ENCODE measurements at regions of chr17 and their contacts with region 1.

Region 1: GRCh38 chr17:12667299-12667958 is 1.7 kb downstream of the MYOCD start:
- DNase-seq: no peak
- ATAC-seq: peak; percentile 78

Region 2: GRCh38 chr17:12180644-12181261 is 486.7 kb before region 1 on chr17:
- intact Hi-C with region 1: loop called in 1 of 2 experiments (anchors 10 kb)
- DNase-seq: peak in 1 of 2 donors; percentile 16
- ATAC-seq: no peak

Region 3: GRCh38 chr17:12250973-12251372 is 416.5 kb before region 1 on chr17:
- intact Hi-C with region 1: loop called in 1 of 2 experiments (anchors 5 kb)
- DNase-seq: no peak
- ATAC-seq: no peak

Region 4: GRCh38 chr17:12545877-12546513 is 121.4 kb before region 1 on chr17:
- intact Hi-C with region 1: loop called in 1 of 2 experiments (anchors 5 kb)
- DNase-seq: peak in 1 of 2 donors; percentile 15
- ATAC-seq: peak; percentile 86

Region 5: GRCh38 chr17:12756786-12757185 is 89.4 kb after region 1 on chr17:
- intact Hi-C with region 1: no loop called
- DNase-seq: no peak
- ATAC-seq: no peak

Measured in left colon (tissue), 2 donors.